ENCODE measurements at regions of chr10 and their contacts with region 1.

Region 1: GRCh38 chr10:63217120-63217605 is 84.0 kb downstream of the NRBF2 start:
- DNase-seq: peak; percentile 54
- H3K4me3 ChIP-seq: peak overlapping the region in 1 of 2 experiments; percentile 1; a peak in 1 of 4 replicates
- H3K27ac ChIP-seq: peak overlapping the region; percentile 58 to 71; a peak in 3 of 4 replicates
- H3K4me1 ChIP-seq: peaks cover 5 to 11% of the 10 kb centered on the region in 2 experiments; a peak in 3 of 4 replicates
- H3K27me3 ChIP-seq: no peaks in the 10 kb centered on the region
- CTCF ChIP-seq: peak; percentile 78
- EP300 ChIP-seq: no peak
- RAD21 ChIP-seq: peak; percentile 81

Region 2: DNA sequence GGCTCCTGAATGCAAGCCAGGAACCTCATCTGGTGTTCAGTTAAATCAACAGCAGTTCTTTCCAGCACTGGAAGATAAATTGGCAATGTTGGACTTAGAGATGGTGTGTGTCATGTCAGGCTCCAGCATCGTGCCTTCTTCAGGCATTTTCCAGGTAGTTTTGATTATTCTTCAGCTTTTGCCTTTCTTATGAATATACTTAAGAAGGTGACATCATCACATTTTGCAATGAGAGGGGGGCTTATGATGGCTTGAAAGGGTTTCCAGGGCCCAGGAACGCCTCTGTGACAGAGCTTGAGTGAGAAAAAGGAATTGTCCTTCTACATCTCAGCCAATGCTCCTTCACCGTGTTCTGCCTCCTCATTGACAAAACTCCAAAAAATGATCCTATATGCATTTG is 812.0 kb before region 1 on chr10:
- CTCF ChIA-PET with region 1: no interaction called
- POLR2A ChIA-PET with region 1: no interaction called
- DNase-seq: no peak
- H3K4me3 ChIP-seq: no peak overlapping the region
- H3K27ac ChIP-seq: no peak overlapping the region
- H3K4me1 ChIP-seq: no peaks in the 10 kb centered on the region
- H3K27me3 ChIP-seq: no peaks in the 10 kb centered on the region
- CTCF ChIP-seq: no peak
- EP300 ChIP-seq: no peak
- RAD21 ChIP-seq: no peak

Region 3: GRCh38 chr10:62992145-62992721 is 224.9 kb before region 1 on chr10:
- CTCF ChIA-PET with region 1: no interaction called
- POLR2A ChIA-PET with region 1: no interaction called
- DNase-seq: no peak
- H3K4me3 ChIP-seq: no peak overlapping the region
- H3K27ac ChIP-seq: no peak overlapping the region
- H3K4me1 ChIP-seq: no peaks in the 10 kb centered on the region
- H3K27me3 ChIP-seq: no peaks in the 10 kb centered on the region
- CTCF ChIP-seq: no peak
- EP300 ChIP-seq: no peak
- RAD21 ChIP-seq: no peak

Region 4: GRCh38 chr10:63454631-63455030 is 237.5 kb after region 1 on chr10:
- CTCF ChIA-PET with region 1: interaction called, 10 read pairs
- POLR2A ChIA-PET with region 1: no interaction called
- DNase-seq: no peak
- H3K4me3 ChIP-seq: no peak overlapping the region
- H3K27ac ChIP-seq: no peak overlapping the region
- H3K4me1 ChIP-seq: peaks cover 4 to 22% of the 10 kb centered on the region in 2 experiments; a peak in 2 of 4 replicates
- H3K27me3 ChIP-seq: no peaks in the 10 kb centered on the region
- CTCF ChIP-seq: no peak
- EP300 ChIP-seq: no peak
- RAD21 ChIP-seq: no peak

Measured in SK-N-SH (cell line).